ENCODE measurements at regions of chr7 and their contacts with region 1.

Region 1: DNA sequence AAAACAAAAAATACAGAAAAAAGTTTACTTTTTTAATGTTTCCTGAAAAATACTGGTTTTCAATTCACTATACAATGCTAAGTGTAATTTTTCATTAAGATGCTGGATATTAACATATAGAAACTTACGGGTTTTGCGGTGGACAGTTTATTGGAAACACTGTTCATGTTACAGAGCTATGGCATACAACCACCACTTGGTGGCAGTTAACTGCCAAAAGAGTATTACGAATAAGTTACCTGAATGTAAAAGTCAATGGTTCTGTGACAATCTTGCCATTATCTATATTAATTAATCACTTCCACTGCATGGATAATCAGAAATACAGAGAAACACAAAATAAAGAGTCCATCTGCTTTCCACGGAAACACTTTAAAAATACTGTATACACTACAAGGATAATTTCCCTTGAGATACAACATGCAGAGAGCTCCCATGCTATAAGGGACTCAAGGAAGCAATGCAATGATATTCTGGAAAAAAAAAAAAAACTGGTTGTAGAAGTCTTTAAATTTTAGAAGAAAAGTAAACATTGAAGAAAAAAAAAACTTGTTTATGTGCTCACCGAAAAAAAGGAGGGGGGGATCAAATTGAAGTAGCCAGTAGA is 97.0 kb downstream of the TPK1 start:
- DNase-seq: no peak
- H3K4me3 ChIP-seq: no peak overlapping the region
- H3K27ac ChIP-seq: no peak overlapping the region
- H3K4me1 ChIP-seq: no peaks in the 10 kb centered on the region
- H3K27me3 ChIP-seq: no peaks in the 10 kb centered on the region
- CTCF ChIP-seq: peak; percentile 48 to 68 (median 59)
- EP300 ChIP-seq: no peak
- POLR2A ChIP-seq: no peak

Region 2: GRCh38 chr7:144835652-144836544 is 97.1 kb after region 1 on chr7 and contains the start of gene TPK1:
- intact Hi-C with region 1: loop called (anchors 10 kb)
- DNase-seq: peak; percentile 96
- H3K4me3 ChIP-seq: peak within 1 kb of the TSS; percentile 76 to 93 (median 84)
- H3K27ac ChIP-seq: peak within 1 kb of the TSS; percentile 93 to 99 (median 96)
- H3K4me1 ChIP-seq: peaks cover 8 to 19% (median 17%) of the 10 kb centered on the region in 4 donors
- H3K27me3 ChIP-seq: no peaks in the 10 kb centered on the region
- CTCF ChIP-seq: no peak
- EP300 ChIP-seq: no peak
- POLR2A ChIP-seq: peak; percentile 43
- total RNA-seq, gene TPK1: 2.7 to 4.3 (median 3.4) TPM